ENCODE measurements at regions of chr3 and their contacts with region 1.

Region 1: DNA sequence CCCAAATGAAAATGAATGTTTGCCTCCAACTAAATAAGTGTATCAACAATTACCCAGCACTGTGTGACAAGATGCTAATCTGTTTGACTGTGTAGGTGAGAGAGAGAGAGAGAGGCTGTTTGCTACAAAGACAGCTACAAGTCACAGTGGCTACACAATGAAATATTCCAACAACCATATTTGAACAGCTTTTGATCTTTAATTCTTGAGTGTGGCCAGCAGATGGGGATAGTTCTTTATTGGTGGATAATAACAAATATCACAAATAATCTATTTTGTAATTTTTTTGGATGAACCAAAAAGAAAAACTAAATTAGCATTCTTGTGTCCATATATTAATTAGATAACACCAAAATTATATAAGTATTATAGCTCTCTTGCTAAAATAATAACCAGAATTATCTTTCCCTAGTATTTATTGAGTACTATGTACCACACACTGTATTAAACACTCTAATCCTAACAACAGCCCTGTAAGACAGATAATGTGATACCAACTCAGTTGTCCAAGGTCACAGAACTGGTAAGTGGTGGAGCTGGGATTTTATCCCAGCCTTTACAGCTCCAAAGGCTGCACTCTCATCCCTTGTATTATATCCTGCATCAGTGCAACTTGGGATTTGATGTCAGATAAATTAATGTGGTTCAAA is 61.9 kb upstream of the C3orf80 start:
- DNase-seq: peak; percentile 27
- CTCF ChIP-seq: peak; percentile 39

Region 2: DNA sequence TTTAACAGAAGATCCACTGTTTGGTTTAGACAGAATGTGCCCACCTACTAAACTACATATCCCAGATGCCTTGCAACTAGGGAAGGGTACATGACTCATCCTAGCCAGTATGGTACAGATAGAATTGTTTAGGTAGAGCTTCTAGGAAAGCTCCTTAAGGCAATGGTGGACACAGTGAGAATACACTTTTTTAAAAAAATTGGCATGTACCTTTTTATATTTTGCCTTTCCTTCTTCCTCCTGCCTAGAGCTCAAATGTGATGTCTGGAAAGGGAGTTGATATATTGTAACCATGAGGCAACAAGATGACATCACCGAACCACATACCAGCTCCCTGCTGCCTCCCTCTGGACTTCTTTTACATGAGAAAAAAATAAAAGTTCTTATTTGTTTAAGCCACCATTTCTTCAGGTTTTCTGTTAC is 47.5 kb after region 1 on chr3:
- CTCF ChIA-PET with region 1: interaction called, 13 read pairs
- POLR2A ChIA-PET with region 1: no interaction called
- DNase-seq: no peak
- CTCF ChIP-seq: no peak

Region 3: GRCh38 chr3:160343132-160343531 is 179.8 kb after region 1 on chr3:
- CTCF ChIA-PET with region 1: interaction called, 18 read pairs
- POLR2A ChIA-PET with region 1: interaction called, 3 read pairs
- DNase-seq: no peak
- CTCF ChIP-seq: peak; percentile 51

Region 4: GRCh38 chr3:160381470-160381869 is 218.1 kb after region 1 on chr3:
- CTCF ChIA-PET with region 1: no interaction called
- POLR2A ChIA-PET with region 1: no interaction called
- DNase-seq: no peak
- CTCF ChIP-seq: no peak